ENCODE measurements at regions of chr7 and their contacts with region 1.

Region 1: DNA sequence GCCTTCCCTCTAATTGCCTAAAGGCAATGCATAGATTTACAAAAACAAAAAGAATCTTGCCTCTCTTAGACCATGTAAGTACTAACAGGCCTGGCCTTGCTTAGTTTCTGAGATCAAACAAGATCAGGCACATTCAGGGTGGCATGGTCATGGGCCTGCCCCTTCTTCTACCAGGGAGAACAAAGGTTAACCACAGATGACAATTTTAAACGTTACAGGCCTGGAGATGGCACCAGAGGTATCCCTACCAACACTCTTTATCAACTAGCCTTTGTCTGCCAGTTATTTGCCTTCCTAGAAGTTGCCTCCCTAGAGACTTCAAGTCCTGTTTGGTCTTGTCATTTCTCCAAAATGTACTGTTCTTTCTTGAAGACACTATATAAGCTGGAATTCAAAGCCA is 252.6 kb downstream of the DOCK4 start:
- DNase-seq: peak; percentile 44 to 75 (median 65)
- ATAC-seq: peak; percentile 96 to 98 (median 96)
- H3K4me3 ChIP-seq: no peak overlapping the region
- H3K27ac ChIP-seq: peak overlapping the region; percentile 43 to 64 (median 46)
- H3K4me1 ChIP-seq: peaks cover 0 to 5% (median 0%) of the 10 kb centered on the region in 4 donors
- H3K27me3 ChIP-seq: no peaks in the 10 kb centered on the region
- CTCF ChIP-seq: peak; percentile 45 to 59 (median 52)
- POLR2A ChIP-seq: no peak

Region 2: GRCh38 chr7:111678281-111678680 is 275.3 kb before region 1 on chr7:
- intact Hi-C with region 1: no loop called
- DNase-seq: no peak
- ATAC-seq: no peak
- H3K4me3 ChIP-seq: no peak overlapping the region
- H3K27ac ChIP-seq: no peak overlapping the region
- H3K4me1 ChIP-seq: no peaks in the 10 kb centered on the region
- H3K27me3 ChIP-seq: no peaks in the 10 kb centered on the region
- CTCF ChIP-seq: no peak
- POLR2A ChIP-seq: no peak

Region 3: GRCh38 chr7:112400141-112400540 is 446.5 kb after region 1 on chr7:
- intact Hi-C with region 1: loop called in 1 of 2 experiments (anchors 10 kb)
- DNase-seq: no peak
- ATAC-seq: no peak
- H3K4me3 ChIP-seq: no peak overlapping the region
- H3K27ac ChIP-seq: no peak overlapping the region
- H3K4me1 ChIP-seq: no peaks in the 10 kb centered on the region
- H3K27me3 ChIP-seq: no peaks in the 10 kb centered on the region
- CTCF ChIP-seq: no peak
- POLR2A ChIP-seq: no peak

Region 4: DNA sequence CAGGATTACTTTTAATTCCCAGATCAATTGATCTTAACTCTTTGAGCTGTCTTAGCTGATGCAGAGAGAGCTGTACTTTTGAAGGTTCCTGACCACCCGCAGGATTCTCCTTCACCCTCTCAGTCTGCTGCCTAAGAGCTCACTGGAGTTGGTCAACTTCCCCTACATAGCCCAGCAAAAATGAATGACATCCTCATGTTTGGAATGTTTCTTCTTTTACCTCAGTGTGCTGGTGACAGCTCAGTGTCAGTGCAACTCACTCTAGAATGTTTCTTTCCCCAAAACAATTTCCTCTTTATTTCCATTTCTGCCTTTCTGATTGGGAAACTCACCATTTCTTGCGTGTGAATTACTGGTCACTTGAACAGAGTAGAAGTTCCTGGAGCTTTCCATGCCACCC is 575.9 kb after region 1 on chr7:
- intact Hi-C with region 1: no loop called
- DNase-seq: no peak
- ATAC-seq: no peak
- H3K4me3 ChIP-seq: no peak overlapping the region
- H3K27ac ChIP-seq: no peak overlapping the region
- H3K4me1 ChIP-seq: no peaks in the 10 kb centered on the region
- H3K27me3 ChIP-seq: no peaks in the 10 kb centered on the region
- CTCF ChIP-seq: no peak
- POLR2A ChIP-seq: no peak

Measured in right lobe of liver (tissue), 6 donors.